IMR-90 (cell line): ENCODE measurements at regions of chr11 and their contacts with region 1.

Region 1: DNA sequence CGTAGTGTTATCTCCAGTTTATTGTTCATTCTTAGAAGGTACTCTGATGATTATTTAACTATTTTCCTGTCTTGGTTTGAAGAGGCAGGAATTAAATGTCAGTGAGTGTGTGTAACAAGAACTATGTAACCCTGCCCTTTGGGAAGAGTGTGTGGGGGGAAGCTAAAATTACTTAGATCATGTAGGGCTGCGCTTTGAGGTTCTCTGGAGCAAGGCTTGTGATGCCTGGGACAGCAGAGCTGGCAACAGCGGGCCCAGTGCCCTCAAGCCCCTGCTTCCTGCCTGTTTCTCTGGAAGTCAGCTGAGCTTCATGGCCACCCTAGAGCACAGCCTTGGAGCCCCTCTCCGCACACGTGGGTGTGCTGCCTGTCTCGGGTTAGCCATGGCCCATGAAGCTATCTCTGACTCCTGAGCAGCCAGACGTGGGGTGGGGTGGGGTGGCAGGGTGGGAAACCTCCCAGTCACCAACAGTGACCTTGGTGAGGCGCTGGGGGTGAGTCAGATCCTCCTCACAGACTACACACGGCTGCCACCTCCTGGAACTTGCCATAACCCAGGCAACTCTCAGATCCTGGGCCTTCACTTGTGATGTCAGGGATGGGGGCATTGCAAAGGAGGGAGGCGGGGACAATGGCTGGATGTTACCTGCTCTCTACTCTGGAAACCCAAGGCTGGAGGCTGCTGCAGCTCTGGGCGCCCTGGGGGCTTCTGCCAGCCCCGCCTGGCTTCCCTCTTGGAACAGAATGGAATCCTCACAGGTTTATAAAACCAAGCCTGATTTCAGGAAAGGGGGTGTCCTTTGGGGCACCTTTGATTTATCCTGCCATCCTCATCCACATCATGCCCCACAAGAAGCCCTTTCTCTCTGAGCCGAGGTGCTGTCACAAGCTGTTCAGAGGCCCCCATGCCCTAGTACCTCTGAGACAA is 88.6 kb downstream of the SNX19 start:
- DNase-seq: peak; percentile 82
- ATAC-seq: peak; percentile 97
- H3K4me3 ChIP-seq: no peak overlapping the region
- H3K27ac ChIP-seq: peak overlapping the region; percentile 77
- H3K4me1 ChIP-seq: peaks cover 14% of the 10 kb centered on the region
- H3K27me3 ChIP-seq: peaks cover 6% of the 10 kb centered on the region
- CTCF ChIP-seq: peak; percentile 73
- POLR2A ChIP-seq: no peak
- RAD21 ChIP-seq: peak; percentile 91

Region 2: DNA sequence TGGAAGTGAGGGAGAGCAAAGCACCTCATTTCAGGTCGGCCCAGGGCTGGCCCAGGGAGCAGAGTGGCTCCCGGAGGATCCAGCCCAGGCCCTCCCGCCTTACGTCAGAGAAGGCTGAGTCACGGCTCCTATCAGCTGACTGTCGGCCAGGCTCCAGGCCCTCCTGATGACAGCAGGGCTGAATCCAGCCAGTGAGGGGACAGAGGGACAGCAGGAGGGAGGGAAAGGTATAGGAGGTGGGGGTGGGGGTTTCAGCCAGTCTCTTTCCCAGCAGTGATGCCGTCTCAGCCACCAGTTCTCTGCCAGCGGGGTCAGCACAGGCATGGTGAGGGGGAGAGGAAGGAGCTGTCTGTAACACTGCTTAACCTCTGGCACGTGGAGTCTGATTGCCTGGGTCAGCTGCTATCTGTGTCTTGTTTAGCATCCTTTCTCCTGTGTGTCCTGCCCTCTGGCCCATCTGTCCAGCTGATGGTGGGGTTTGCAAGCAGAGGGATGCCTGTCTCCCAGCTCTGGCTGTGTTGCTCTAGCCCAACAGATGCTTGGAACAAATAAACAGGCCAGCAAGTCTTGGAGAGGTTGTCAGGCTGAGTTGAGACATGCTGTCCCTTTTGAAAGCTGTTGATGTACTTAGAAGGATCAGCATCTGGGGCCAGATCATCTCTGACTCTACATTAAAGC is 305.3 kb before region 1 on chr11:
- CTCF ChIA-PET with region 1: no interaction called
- POLR2A ChIA-PET with region 1: no interaction called
- dilution Hi-C with region 1: no loop called
- in situ Hi-C with region 1: no loop called
- intact Hi-C with region 1: loop called (anchors 5 kb)
- DNase-seq: peak; percentile 97
- ATAC-seq: peak; percentile 95
- H3K4me3 ChIP-seq: no peak overlapping the region
- H3K27ac ChIP-seq: peak overlapping the region; percentile 95
- H3K4me1 ChIP-seq: peaks cover 20% of the 10 kb centered on the region
- H3K27me3 ChIP-seq: no peaks in the 10 kb centered on the region
- CTCF ChIP-seq: no peak
- POLR2A ChIP-seq: peak; percentile 60
- RAD21 ChIP-seq: no peak; the same call in 1 of the 2 replicates

Region 3: GRCh38 chr11:130636722-130637517 is 190.8 kb before region 1 on chr11:
- CTCF ChIA-PET with region 1: no interaction called
- POLR2A ChIA-PET with region 1: no interaction called
- dilution Hi-C with region 1: no loop called
- in situ Hi-C with region 1: no loop called
- intact Hi-C with region 1: loop called (anchors 5 kb)
- DNase-seq: peak; percentile 92
- ATAC-seq: peak; percentile 66
- H3K4me3 ChIP-seq: no peak overlapping the region
- H3K27ac ChIP-seq: peak overlapping the region; percentile 79
- H3K4me1 ChIP-seq: peaks cover 30% of the 10 kb centered on the region
- H3K27me3 ChIP-seq: no peaks in the 10 kb centered on the region
- CTCF ChIP-seq: no peak
- POLR2A ChIP-seq: no peak
- RAD21 ChIP-seq: peak; percentile 17; the same call in 1 of the 2 replicates

Region 4: GRCh38 chr11:130677486-130678153 is 150.1 kb before region 1 on chr11:
- CTCF ChIA-PET with region 1: no interaction called
- POLR2A ChIA-PET with region 1: no interaction called
- dilution Hi-C with region 1: no loop called
- in situ Hi-C with region 1: no loop called
- intact Hi-C with region 1: loop called (anchors 5 kb)
- DNase-seq: peak; percentile 70
- ATAC-seq: peak; percentile 77
- H3K4me3 ChIP-seq: no peak overlapping the region
- H3K27ac ChIP-seq: peak overlapping the region; percentile 83; the same call in 1 of the 2 replicates
- H3K4me1 ChIP-seq: peaks cover 19% of the 10 kb centered on the region
- H3K27me3 ChIP-seq: no peaks in the 10 kb centered on the region
- CTCF ChIP-seq: no peak
- POLR2A ChIP-seq: no peak
- RAD21 ChIP-seq: no peak

Region 5: GRCh38 chr11:130737866-130738431 is 89.8 kb before region 1 on chr11:
- CTCF ChIA-PET with region 1: no interaction called
- POLR2A ChIA-PET with region 1: no interaction called
- dilution Hi-C with region 1: no loop called
- in situ Hi-C with region 1: no loop called
- intact Hi-C with region 1: loop called (anchors 2 kb)
- DNase-seq: peak; percentile 89
- ATAC-seq: peak; percentile 90
- H3K4me3 ChIP-seq: peak overlapping the region; percentile 0; the same call in 1 of the 2 replicates
- H3K27ac ChIP-seq: peak overlapping the region; percentile 93
- H3K4me1 ChIP-seq: peaks cover 15% of the 10 kb centered on the region
- H3K27me3 ChIP-seq: no peaks in the 10 kb centered on the region
- CTCF ChIP-seq: no peak
- POLR2A ChIP-seq: no peak
- RAD21 ChIP-seq: no peak; the same call in none of the 2 replicates